K562 (cell line): ENCODE measurements at regions of chr3 and their contacts with region 1.

Region 1: DNA sequence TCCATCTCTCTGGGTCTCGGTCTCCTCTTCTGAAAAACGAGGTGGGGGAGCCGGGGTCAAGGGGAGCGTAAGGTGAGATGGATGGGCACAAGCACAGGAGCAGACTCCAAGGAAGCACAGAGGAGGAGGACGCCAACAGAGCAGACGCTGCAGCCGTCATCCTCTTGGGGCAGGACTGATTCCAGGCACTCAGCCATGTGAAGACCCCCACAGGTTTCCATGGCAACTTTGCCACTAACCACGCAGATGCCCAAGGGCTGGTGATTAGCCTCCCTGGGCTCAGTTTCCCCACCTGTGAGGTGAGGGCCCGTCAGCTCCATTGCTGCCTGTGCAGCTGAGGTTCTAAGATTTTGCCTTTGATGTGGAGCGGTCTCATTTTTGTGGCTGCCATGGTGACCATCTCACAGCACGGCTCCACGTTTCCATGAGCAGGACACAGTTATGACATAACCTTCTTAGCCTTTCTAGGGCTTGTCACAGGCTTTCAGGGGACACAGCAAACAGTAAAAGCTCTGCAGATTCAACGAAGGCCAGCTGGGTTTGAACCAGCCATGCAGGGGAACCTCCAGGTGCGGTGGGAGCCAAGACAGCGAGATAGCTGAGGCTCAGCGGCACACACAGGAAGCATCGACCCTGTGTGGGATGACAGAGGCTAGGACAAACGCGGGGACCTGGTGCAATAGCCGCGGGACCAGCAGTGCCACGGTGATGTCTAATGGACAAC is 170.3 kb downstream of the NUP210 start:
- DNase-seq: no peak
- ATAC-seq: peak; percentile 10; the same call in 1 of the 3 replicates
- H3K4me3 ChIP-seq: no peak overlapping the region
- H3K27ac ChIP-seq: no peak overlapping the region
- H3K4me1 ChIP-seq: peaks cover 4 to 5% of the 10 kb centered on the region in 2 experiments; a peak in 2 of 5 replicates
- H3K27me3 ChIP-seq: peaks cover 75 to 95% of the 10 kb centered on the region in 2 experiments
- CTCF ChIP-seq: no peak
- EP300 ChIP-seq: no peak
- POLR2A ChIP-seq: no peak
- RAD21 ChIP-seq: no peak

Region 2: GRCh38 chr3:12934431-12934830 is 315.4 kb before region 1 on chr3:
- CTCF ChIA-PET with region 1: no interaction called
- POLR2A ChIA-PET with region 1: no interaction called
- in situ Hi-C with region 1: no loop called
- intact Hi-C with region 1: no loop called
- DNase-seq: no peak
- ATAC-seq: no peak
- H3K4me3 ChIP-seq: no peak overlapping the region
- H3K27ac ChIP-seq: no peak overlapping the region
- H3K4me1 ChIP-seq: peaks cover 0 to 42% of the 10 kb centered on the region in 2 experiments; a peak in 3 of 5 replicates
- H3K27me3 ChIP-seq: no peaks in the 10 kb centered on the region
- CTCF ChIP-seq: no peak
- EP300 ChIP-seq: no peak
- POLR2A ChIP-seq: no peak
- RAD21 ChIP-seq: no peak

Region 3: DNA sequence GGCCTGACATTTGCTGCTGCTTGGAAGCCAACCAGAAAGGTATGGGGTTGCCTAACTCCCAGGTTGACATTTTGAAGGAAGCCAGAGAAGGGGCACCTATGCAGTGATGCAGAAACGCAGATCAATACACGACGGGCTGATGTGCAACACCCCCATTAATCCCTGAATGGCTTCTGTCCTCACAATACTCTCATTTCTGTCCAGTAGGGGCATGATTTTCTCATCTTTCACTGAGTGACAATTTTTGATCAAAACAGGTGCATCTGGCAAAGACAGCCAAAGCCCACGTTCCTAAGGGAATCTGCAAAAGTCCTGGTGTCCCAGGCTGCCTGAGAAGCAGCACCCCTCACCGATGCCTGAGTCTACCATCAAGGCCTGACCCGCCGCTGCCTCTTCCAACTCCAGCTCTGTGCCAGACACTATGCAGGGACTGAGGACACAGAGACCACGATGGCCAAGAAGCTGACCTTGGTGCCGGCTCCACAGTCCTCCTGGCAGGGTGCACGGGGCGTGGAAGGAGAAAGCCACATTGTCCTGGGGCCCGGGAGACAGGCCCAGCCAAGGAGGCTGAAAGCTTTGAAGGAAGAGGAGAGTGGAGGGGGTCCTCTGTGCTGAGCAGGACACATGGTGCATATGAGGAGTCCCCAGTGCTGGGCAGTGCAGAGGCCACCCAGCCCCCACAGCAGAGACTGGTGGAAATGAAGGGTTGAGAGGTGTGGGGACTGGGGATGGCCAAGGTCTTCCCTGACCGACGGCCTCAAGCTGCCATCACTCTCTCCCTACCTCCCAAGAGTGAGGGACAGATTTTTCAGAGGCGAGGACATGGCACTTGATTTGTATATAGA is 10.7 kb after region 1 on chr3:
- CTCF ChIA-PET with region 1: no interaction called
- POLR2A ChIA-PET with region 1: interaction called, 10 read pairs
- in situ Hi-C with region 1: no loop called
- intact Hi-C with region 1: no loop called
- DNase-seq: no peak
- ATAC-seq: peak; percentile 56
- H3K4me3 ChIP-seq: no peak overlapping the region
- H3K27ac ChIP-seq: no peak overlapping the region
- H3K4me1 ChIP-seq: peaks cover 10 to 15% of the 10 kb centered on the region in 2 experiments; a peak in 4 of 5 replicates
- H3K27me3 ChIP-seq: peaks cover 29 to 82% of the 10 kb centered on the region in 2 experiments
- CTCF ChIP-seq: peak; percentile 34 to 55 (median 40); a peak in 3 of 6 replicates
- EP300 ChIP-seq: no peak
- POLR2A ChIP-seq: no peak
- RAD21 ChIP-seq: 0 out of 4 replicates have a peak, but pooled peaks of 1 of the 2 experiments have one; percentile 10